CD14-positive monocyte (primary cell): ENCODE measurements at regions of chr3 and their contacts with region 1.

Region 1: GRCh38 chr3:31544634-31545033 is 11.9 kb downstream of the STT3B start:
- DNase-seq: peak; percentile 52 to 68 (median 57)
- H3K4me3 ChIP-seq: peak overlapping the region in 1 of 3 experiments; percentile 14
- H3K4me3 Mint-ChIP-seq: peak overlapping the region; percentile 13 to 57
- H3K27ac ChIP-seq: peak overlapping the region; percentile 69
- H3K27ac Mint-ChIP-seq: peak overlapping the region; percentile 85 to 95 (median 91)
- H3K4me1 ChIP-seq: peaks cover 43 to 90% of the 10 kb centered on the region in 2 donors
- H3K4me1 Mint-ChIP-seq: peaks cover 74% of the 10 kb centered on the region
- H3K27me3 ChIP-seq: no peaks in the 10 kb centered on the region
- H3K27me3 Mint-ChIP-seq: no peaks in the 10 kb centered on the region
- CTCF ChIP-seq: no peak

Region 2: DNA sequence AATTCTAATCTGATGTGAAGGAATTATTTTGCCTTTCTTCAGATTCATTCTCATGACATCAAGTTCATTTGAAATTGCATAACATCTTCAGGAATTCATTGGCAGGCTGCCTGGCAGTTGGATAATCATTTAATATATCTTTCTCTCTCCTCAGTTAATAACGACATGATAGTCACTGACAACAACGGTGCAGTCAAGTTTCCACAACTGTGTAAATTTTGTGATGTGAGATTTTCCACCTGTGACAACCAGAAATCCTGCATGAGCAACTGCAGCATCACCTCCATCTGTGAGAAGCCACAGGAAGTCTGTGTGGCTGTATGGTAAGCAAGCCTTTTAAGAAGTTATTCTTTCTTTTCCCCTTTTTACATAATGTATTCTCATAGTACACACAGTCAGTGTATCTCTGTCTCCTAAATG is 900.0 kb before region 1 on chr3:
- intact Hi-C with region 1: loop called in 1 of 2 experiments (anchors 10 kb)
- DNase-seq: peak in 2 of 3 donors; percentile 33 to 43
- H3K4me3 ChIP-seq: peak overlapping the region in 1 of 3 experiments; percentile 44
- H3K4me3 Mint-ChIP-seq: peak overlapping the region in 1 of 2 donors; percentile 16
- H3K27ac ChIP-seq: peak overlapping the region in 1 of 2 donors; percentile 89
- H3K27ac Mint-ChIP-seq: peak overlapping the region; percentile 77 to 90 (median 81)
- H3K4me1 ChIP-seq: peaks cover 96 to 100% of the 10 kb centered on the region in 2 donors
- H3K4me1 Mint-ChIP-seq: peaks cover 96% of the 10 kb centered on the region
- H3K27me3 ChIP-seq: no peaks in the 10 kb centered on the region
- H3K27me3 Mint-ChIP-seq: no peaks in the 10 kb centered on the region
- CTCF ChIP-seq: no peak

Region 3: DNA sequence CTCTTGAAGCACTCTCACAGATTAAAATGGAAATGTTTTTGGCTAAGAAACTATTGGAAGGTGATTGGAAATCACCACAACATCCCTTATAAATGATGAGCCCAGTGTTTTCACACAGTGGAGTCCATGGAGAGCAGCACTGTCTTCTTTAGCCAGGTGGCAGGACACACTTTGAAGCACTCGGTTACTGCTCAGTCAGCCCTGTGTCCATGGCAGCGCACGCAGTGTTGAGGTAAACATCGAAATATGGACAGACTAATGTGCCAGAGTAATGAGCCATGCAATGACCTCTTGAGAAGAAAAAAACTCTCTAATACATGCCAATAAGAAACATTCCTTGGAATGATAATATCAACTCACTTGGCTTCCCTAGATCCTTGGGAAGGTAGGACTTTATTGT is 871.7 kb before region 1 on chr3:
- intact Hi-C with region 1: no loop called
- DNase-seq: no peak
- H3K4me3 ChIP-seq: no peak overlapping the region
- H3K4me3 Mint-ChIP-seq: no peak overlapping the region
- H3K27ac ChIP-seq: peak overlapping the region in 1 of 2 donors; percentile 61
- H3K27ac Mint-ChIP-seq: peak overlapping the region in 5 of 7 donors; percentile 41 to 76 (median 68)
- H3K4me1 ChIP-seq: peaks cover 15 to 20% of the 10 kb centered on the region in 2 donors
- H3K4me1 Mint-ChIP-seq: peaks cover 25% of the 10 kb centered on the region
- H3K27me3 ChIP-seq: no peaks in the 10 kb centered on the region
- H3K27me3 Mint-ChIP-seq: no peaks in the 10 kb centered on the region
- CTCF ChIP-seq: no peak